Spleen (tissue), 13 donors: ENCODE measurements at regions of chr12 and their contacts with region 1.

Region 1: DNA sequence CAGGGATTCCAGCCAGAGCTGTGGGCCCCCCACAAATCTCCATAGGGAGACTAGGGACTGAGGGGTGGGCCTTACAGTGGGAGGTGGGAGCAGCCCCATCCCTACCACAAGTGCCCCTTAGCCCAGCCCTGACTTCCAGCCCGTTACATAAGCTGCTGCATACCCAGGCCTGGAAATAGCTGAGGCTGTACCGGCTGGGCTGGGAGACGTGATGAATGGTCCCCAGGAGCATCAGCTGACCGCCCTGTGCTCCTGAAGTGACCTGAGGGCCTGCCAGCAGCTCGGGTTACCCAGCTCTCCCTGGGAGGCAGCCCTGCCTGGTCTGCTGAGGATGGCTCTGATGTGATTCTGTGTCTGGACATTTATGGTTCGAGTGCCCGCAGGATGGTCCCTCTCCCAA is 20.3 kb downstream of the TAMALIN start:
- DNase-seq: no peak
- H3K4me3 ChIP-seq: no peak overlapping the region
- H3K27ac ChIP-seq: peak overlapping the region in 1 of 8 donors; percentile 90
- H3K4me1 ChIP-seq: peaks cover 23 to 58% (median 48%) of the 10 kb centered on the region in 6 donors
- H3K27me3 ChIP-seq: peaks cover 0 to 8% (median 0%) of the 10 kb centered on the region in 7 donors
- CTCF ChIP-seq: no peak
- POLR2A ChIP-seq: no peak

Region 2: GRCh38 chr12:52082988-52083637 is 56.1 kb after region 1 on chr12:
- intact Hi-C with region 1: loop called (anchors 2 kb)
- DNase-seq: peak; percentile 89
- H3K4me3 ChIP-seq: no peak overlapping the region
- H3K27ac ChIP-seq: peak overlapping the region in 7 of 8 donors; percentile 48 to 88 (median 79)
- H3K4me1 ChIP-seq: peaks cover 28 to 58% (median 40%) of the 10 kb centered on the region in 6 donors
- H3K27me3 ChIP-seq: peaks cover 0 to 5% (median 0%) of the 10 kb centered on the region in 7 donors
- CTCF ChIP-seq: peak; percentile 84 to 97 (median 93)
- POLR2A ChIP-seq: no peak

Region 3: DNA sequence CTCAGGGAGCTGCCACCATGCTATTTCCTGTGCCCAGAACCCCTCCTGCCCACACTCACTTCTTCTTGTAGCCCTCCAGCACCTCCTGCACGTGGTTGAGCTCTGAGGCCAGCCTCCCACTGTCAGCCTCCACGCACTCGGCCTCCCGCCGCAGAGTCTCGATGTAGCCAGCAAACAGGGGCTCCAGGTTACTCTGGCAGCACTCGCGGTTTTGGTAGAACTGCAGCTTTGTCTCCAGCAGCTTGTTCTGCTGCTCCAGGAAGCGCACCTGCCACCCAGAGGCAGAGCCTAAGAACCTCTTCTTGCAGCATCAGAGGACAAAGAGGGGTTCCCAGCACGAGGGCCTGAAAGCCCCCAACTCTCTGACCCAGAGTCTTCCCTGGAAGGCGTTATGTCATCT is 292.1 kb after region 1 on chr12:
- intact Hi-C with region 1: no loop called
- DNase-seq: peak; percentile 62
- H3K4me3 ChIP-seq: no peak overlapping the region
- H3K27ac ChIP-seq: no peak overlapping the region
- H3K4me1 ChIP-seq: no peaks in the 10 kb centered on the region
- H3K27me3 ChIP-seq: peaks cover 0 to 45% (median 7%) of the 10 kb centered on the region in 7 donors
- CTCF ChIP-seq: no peak
- POLR2A ChIP-seq: no peak